HEK293 (cell line): ENCODE measurements at regions of chr10 and their contacts with region 1.

Region 1: GRCh38 chr10:61592581-61592980 is 70.1 kb upstream of the CABCOCO1 start:
- H3K4me3 ChIP-seq: no peak overlapping the region
- H3K27ac ChIP-seq: no peak overlapping the region
- H3K4me1 ChIP-seq: no peaks in the 10 kb centered on the region
- CTCF ChIP-seq: no peak; the same call in 1 of the 2 replicates

Region 2: DNA sequence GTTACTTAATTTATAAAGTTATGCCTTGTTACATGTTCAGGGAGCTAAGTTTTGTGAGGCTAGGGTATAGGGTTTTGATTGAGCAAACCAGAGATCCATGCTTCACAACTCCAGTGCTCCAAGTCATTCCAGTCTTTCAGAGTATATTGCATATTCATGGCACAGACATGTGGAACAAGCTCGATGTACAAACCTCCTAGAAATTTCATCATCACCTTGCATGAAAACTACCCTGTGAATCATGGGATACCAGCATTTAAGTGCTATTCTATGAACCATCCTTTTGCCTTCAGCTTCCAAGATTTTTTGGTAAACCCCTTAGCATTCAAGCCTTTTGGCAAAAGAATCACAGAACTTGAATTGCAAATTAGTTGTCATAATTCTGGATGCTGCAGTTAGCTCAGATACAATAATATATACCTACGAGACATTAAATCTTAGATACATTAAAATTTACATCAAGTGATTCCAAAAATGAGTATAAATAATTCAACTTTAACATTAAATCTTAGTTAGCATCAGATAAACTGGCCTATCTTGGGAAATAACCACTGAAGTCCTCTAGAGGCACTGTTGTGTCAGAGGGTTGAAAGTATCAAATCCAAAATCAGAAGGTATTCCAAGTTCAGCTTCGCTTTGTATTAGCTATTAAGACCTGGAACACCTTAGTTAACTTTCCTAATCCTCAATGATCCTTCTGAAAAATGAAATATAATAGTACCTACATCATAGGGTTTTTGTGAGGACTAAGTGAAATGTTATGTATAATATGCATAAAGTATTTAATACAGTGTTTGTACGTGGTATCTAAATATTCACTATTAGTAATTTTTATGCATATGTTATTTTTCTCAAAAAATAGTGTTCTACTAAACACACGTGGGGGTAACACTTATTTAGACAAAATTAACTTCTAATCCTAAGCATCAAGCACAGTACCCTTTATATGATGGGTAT is 14.6 kb after region 1 on chr10:
- CTCF ChIA-PET with region 1: interaction called, 14 read pairs
- POLR2A ChIA-PET with region 1: no interaction called
- H3K4me3 ChIP-seq: no peak overlapping the region
- H3K27ac ChIP-seq: no peak overlapping the region
- H3K4me1 ChIP-seq: peaks cover 3% of the 10 kb centered on the region
- CTCF ChIP-seq: no peak